AG04449 (cell line): ENCODE measurements at regions of chr10 and their contacts with region 1.

Region 1: DNA sequence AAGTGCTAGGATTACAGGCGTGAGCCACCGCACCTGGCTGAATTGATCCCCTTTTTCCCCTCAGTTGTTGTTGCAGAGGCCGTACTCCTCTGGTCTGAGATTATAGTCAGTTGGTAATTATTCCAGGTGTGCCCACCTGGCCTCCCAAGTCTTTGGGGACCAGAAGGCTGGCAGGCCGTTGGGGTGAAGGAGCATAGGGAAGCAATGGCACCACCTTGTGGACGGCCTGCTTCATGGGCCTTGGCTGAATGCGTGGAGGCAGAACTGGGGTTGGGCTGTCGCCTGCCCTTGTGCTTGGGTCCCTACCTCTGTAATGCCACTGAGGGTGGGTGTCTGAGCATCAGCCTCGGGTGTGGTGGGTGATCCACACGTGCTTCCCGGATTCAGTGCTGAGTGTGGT is 125.7 kb downstream of the RGS10 start:
- DNase-seq: no peak
- H3K4me3 ChIP-seq: no peak overlapping the region
- CTCF ChIP-seq: peak; percentile 84

Region 2: DNA sequence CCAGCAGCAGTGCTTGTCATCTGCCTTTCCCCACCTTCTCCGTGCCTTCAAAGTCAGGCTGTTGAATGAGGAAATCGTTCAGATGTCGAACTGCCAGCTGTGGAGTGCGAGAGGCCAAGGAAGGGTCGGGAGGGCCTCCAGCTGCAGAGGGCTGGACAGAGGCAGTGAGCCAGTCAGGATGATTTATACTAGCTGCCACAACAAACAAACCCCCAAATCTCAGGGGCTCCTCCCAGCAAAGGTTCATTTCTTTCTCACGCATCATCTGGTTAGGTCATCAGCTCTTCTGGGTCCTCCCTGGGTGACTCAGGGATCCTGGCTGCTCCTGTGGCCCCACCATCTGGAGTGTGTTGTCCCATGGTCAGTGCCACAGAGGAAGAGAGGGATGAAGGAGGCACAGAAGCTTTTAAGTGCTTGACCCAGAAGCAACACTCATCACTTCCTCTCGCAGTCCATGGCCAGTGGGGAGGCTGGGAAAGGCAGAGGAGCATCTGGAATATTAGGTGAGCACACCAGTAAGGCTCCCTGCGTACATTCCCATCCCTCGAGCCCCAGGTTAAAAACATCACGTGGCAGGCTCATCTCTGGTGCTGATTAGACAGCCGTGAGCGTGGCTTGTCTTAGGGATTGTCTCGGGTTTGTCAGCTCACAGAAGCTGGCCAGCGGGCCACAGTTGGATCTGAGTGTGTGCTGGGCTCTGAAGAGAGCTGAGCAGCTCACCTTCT is 15.0 kb before region 1 on chr10:
- CTCF ChIA-PET with region 1: interaction called, 25 read pairs
- POLR2A ChIA-PET with region 1: interaction called, 7 read pairs
- DNase-seq: peak; percentile 74
- H3K4me3 ChIP-seq: no peak overlapping the region
- CTCF ChIP-seq: no peak

Region 3: DNA sequence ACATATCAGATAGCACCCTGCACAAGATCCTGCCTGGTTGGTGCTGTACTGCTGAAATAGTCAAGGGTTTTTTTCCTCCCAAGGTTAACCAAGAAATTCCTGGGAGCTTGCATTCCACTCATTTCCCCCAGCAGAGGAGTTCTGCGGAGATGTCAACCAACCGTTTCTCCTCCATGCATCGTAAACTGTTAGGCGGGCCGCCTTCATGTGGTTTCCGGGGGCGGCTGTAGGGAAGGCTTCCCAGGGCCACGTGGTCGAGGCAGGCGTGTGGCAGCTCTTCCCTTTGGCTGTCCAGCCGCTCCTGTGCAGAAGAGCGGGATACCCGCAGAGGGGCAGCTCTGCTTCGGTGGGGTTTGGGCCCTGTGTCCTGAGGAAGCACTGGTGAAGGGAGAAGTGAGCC is 11.9 kb after region 1 on chr10:
- CTCF ChIA-PET with region 1: interaction called, 13 read pairs
- POLR2A ChIA-PET with region 1: no interaction called
- DNase-seq: peak; percentile 46
- H3K4me3 ChIP-seq: no peak overlapping the region
- CTCF ChIP-seq: peak; percentile 25

Region 4: DNA sequence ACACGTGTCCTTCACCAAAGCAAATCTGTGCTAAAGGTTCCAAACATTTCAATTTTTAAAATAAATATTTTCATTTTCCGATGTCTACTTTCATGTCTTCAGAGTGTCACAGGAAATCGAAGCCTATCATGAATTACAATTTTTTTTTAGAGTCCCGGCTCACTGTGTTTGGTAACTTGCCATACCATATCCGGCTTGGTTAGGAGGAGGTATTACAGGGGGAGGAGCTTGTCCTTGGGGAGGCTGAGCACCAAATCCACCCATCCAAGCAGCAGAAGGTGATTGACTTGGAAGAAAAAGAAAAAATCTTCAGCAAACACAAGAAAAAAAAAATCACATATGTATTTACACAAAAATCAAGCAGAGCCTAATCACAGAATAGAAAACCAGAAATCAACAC is 158.7 kb after region 1 on chr10:
- CTCF ChIA-PET with region 1: no interaction called
- POLR2A ChIA-PET with region 1: no interaction called
- DNase-seq: no peak
- H3K4me3 ChIP-seq: no peak overlapping the region
- CTCF ChIP-seq: no peak